H1 (cell line): ENCODE measurements at regions of chr12 and their contacts with region 1.

Region 1: DNA sequence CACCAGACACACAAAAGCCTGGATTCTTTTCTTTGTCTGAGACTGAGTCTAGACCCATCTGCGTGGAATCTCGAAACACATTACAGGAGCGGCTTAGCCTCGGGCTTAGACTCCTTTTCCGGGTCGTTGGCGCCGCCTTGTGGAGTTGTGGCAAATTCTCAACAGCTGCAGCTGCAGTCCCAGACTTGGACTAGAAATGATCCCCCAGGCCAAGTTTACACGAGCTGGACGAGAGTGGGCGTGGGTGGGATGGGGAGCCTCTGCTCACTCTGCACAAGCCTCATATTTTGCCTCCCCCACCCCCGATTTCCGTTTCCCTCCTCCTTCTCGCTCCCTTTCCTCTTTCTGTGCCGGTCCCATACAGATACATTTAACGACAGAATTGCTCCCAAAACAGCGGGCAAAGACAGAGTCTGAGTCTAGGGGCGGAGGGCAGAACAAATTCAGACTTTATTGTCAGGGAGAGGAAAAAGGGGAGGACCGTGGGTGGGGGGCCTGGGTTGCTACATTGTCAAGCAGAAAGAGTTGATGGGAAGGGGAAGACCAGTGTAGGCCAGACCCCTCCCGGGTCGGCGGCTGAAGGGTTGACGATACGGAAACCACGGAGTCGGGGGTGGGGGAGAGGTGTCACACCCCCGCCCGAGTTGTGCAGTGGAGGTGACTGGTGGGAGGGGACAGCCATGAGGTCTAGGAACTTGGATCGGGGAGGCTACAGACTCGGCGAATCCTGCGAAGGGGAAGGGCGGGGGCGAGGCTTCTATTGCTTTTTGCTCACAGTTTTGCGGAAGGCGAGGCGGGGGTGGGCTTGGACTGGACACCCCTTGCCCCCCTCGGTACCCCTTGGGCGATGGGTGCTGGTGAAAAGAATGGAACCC is 4.7 kb upstream of the GPR84 start:
- DNase-seq: peak in 1 of 2 experiments; percentile 90
- H3K4me3 ChIP-seq: peak overlapping the region; percentile 4 to 64 (median 17); a peak in 5 of 8 replicates
- H3K27ac ChIP-seq: no peak overlapping the region
- H3K4me1 ChIP-seq: peaks cover 0 to 11% (median 6%) of the 10 kb centered on the region in 4 experiments; a peak in 5 of 7 replicates
- H3K27me3 ChIP-seq: peaks cover 0 to 16% (median 12%) of the 10 kb centered on the region in 4 experiments; a peak in 6 of 7 replicates
- CTCF ChIP-seq: peak; percentile 90 to 94 (median 94)
- EP300 ChIP-seq: no peak
- POLR2A ChIP-seq: no peak
- RAD21 ChIP-seq: peak; percentile 84 to 88

Region 2: DNA sequence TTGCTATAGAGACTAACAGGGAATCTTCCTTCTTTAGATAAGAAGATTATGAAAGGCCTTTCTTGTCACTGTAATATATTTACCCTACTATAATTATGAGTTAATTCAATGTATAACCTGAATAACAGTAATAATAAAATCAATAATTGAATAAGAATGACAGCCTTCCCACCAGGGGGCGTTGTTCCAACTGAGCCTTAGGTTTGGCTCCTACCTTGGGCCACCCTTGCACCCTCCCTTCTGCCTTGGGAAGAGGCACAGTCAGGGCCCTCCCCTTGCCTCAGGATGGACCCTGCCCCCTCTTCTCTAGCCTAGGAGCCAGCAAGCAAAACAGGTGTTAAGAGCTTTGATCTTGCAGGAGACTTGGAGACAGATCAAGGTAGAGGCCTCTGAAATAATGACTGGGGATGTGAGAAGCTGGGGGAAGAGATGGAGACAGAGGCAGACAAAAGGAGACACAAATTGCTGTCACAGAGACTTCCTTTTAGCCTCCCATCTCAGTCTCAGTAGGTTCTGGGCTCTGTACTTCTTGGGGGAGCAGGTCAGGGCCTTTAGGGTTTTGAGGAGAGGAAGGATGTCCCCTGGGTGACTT is 577.1 kb before region 1 on chr12:
- CTCF ChIA-PET with region 1: no interaction called
- POLR2A ChIA-PET with region 1: no interaction called
- DNase-seq: peak; percentile 2 to 78
- H3K4me3 ChIP-seq: no peak overlapping the region
- H3K27ac ChIP-seq: no peak overlapping the region
- H3K4me1 ChIP-seq: peaks cover 0 to 2% (median 0%) of the 10 kb centered on the region in 4 experiments; a peak in 1 of 7 replicates
- H3K27me3 ChIP-seq: peaks cover 0 to 12% (median 2%) of the 10 kb centered on the region in 4 experiments; a peak in 4 of 7 replicates
- CTCF ChIP-seq: peak; percentile 59 to 66 (median 66)
- EP300 ChIP-seq: no peak
- POLR2A ChIP-seq: no peak
- RAD21 ChIP-seq: peak; percentile 53 to 62

Region 3: GRCh38 chr12:54300732-54301427 is 68.1 kb before region 1 on chr12 and contains the start of gene NFE2:
- CTCF ChIA-PET with region 1: interaction called, 251 read pairs
- POLR2A ChIA-PET with region 1: no interaction called
- DNase-seq: peak; percentile 75 to 85
- H3K4me3 ChIP-seq: peak within 1 kb of the TSS; percentile 24 to 63 (median 46)
- H3K27ac ChIP-seq: peak within 1 kb of the TSS; percentile 75
- H3K4me1 ChIP-seq: peaks cover 12 to 32% (median 21%) of the 10 kb centered on the region in 4 experiments
- H3K27me3 ChIP-seq: peaks cover 0 to 7% (median 0%) of the 10 kb centered on the region in 4 experiments; a peak in 1 of 7 replicates
- CTCF ChIP-seq: peak in 2 of 3 experiments; percentile 21 to 35; a peak in 2 of 4 replicates
- EP300 ChIP-seq: no peak
- POLR2A ChIP-seq: peak in 1 of 2 experiments; percentile 67; a peak in 2 of 3 replicates
- RAD21 ChIP-seq: peak; percentile 8 to 17; a peak in 1 of 4 replicates
- total RNA-seq, gene NFE2: 1.4 and 2.0 TPM in 2 replicates

Region 4: DNA sequence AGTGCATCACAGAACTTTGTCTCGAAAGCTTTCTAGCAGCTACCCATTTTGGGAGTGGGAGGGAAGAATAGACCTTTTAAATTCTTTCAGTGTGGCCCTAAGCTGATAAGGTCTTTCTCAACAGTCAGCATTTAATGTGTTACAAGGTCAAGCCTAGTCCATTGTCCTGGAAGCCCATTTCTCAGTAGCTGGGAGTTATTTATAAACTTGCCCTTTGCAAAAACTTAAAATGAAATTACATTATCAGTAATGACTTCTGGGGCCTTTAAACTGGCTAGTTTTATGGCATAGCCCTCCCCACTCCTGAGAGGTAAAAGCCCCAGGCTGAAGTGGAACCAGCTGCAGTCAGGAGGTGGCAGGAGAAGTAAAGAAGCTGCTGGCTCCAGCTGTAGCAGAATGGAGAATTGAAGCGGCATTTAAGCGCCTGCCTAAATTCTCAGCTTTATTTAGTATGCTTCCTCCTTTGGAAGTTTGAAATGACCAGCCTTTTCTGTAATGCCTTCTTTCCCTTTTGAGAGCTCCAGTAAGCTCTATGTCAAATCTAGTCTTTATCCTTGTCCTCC is 31.6 kb before region 1 on chr12:
- CTCF ChIA-PET with region 1: interaction called, 348 read pairs
- POLR2A ChIA-PET with region 1: interaction called, 109 read pairs
- DNase-seq: no peak
- H3K4me3 ChIP-seq: no peak overlapping the region
- H3K27ac ChIP-seq: no peak overlapping the region
- H3K4me1 ChIP-seq: no peaks in the 10 kb centered on the region
- H3K27me3 ChIP-seq: no peaks in the 10 kb centered on the region
- CTCF ChIP-seq: no peak
- EP300 ChIP-seq: no peak
- POLR2A ChIP-seq: no peak
- RAD21 ChIP-seq: peak in 1 of 2 experiments; percentile 26; a peak in 1 of 4 replicates

Region 5: GRCh38 chr12:54388235-54389138 is 19.5 kb after region 1 on chr12:
- CTCF ChIA-PET with region 1: interaction called, 100 read pairs
- POLR2A ChIA-PET with region 1: interaction called, 4 read pairs
- DNase-seq: no peak
- H3K4me3 ChIP-seq: peak overlapping the region in 1 of 4 experiments; percentile 11; a peak in 2 of 8 replicates
- H3K27ac ChIP-seq: no peak overlapping the region
- H3K4me1 ChIP-seq: peaks cover 51 to 68% (median 58%) of the 10 kb centered on the region in 4 experiments
- H3K27me3 ChIP-seq: peaks cover 0 to 4% (median 0%) of the 10 kb centered on the region in 4 experiments; a peak in 2 of 7 replicates
- CTCF ChIP-seq: no peak
- EP300 ChIP-seq: no peak
- POLR2A ChIP-seq: no peak
- RAD21 ChIP-seq: no peak

Region 6: DNA sequence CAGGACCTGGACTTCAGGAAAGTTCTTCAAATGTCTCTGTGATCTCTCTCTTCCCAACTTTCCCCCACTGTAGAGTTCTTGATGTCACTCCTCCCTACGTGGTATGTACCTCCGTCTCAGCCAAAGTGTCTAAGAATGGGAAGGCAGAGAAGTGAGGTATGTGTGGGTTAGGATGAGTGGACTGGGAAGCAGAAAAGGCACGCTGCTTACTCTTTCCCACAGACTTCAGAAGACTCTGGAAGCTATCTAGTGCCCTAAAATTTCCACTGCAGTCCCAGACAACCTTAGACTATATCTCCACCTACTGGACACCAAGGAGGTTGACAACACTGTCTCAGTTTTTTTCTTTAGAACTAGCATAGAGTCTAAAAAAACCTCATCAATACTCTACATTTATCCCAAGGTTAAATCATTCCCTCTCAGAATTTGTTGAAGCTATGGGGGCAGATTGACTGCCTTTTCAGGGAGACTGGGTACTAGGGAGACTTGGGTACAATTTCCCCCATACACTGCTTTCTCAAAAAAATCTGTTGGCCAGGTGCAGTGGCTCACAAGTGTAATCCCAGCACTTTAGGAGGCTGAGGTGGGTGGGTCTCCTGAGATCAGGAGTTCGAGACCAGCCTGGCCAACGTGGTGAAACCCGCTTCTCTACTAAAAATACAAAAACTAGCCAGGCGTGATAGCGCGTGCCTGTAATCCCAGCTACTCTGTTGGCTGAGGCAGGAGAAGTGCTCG is 70.7 kb after region 1 on chr12:
- CTCF ChIA-PET with region 1: interaction called, 18 read pairs
- POLR2A ChIA-PET with region 1: no interaction called
- DNase-seq: no peak
- H3K4me3 ChIP-seq: no peak overlapping the region
- H3K27ac ChIP-seq: no peak overlapping the region
- H3K4me1 ChIP-seq: no peaks in the 10 kb centered on the region
- H3K27me3 ChIP-seq: peaks cover 1 to 10% (median 9%) of the 10 kb centered on the region in 4 experiments; a peak in 5 of 7 replicates
- CTCF ChIP-seq: peak in 2 of 3 experiments; percentile 76 to 89; a peak in 3 of 4 replicates
- EP300 ChIP-seq: no peak
- POLR2A ChIP-seq: no peak
- RAD21 ChIP-seq: peak; percentile 94 to 95